ENCODE measurements at regions of chr2 and their contacts with region 1.

Region 1: GRCh38 chr2:223993621-223994232 is 36.5 kb downstream of the MRPL44 start:
- DNase-seq: peak; percentile 77
- ATAC-seq: peak; percentile 44
- H3K4me3 ChIP-seq: no peak overlapping the region
- H3K27ac ChIP-seq: no peak overlapping the region
- H3K4me1 ChIP-seq: peaks cover 61% of the 10 kb centered on the region
- H3K27me3 ChIP-seq: no peaks in the 10 kb centered on the region
- CTCF ChIP-seq: peak; percentile 92
- EP300 ChIP-seq: no peak
- POLR2A ChIP-seq: no peak
- RAD21 ChIP-seq: peak; percentile 86

Region 2: DNA sequence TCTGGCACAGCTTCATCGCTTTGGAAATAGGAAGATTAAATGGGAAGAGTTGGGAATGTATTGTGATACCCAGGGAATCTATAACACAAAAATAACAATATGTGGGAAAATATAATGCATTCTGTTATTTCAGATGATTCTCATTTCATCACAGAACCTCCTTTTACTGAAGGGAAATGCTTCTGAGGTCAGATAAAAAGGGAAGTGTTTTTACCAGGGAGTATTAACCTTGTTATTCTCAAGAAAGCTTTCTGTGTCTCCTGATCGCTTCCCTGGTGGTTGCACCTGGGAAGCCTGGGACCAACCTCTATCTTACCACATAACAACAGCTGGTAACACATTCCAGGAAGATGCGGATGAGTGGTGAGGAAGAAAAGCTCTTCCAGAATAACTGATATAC is 438.8 kb before region 1 on chr2:
- CTCF ChIA-PET with region 1: no interaction called
- POLR2A ChIA-PET with region 1: no interaction called
- in situ Hi-C with region 1: no loop called
- intact Hi-C with region 1: loop called (anchors 5 kb)
- DNase-seq: no peak
- ATAC-seq: no peak
- H3K4me3 ChIP-seq: no peak overlapping the region
- H3K27ac ChIP-seq: no peak overlapping the region
- H3K4me1 ChIP-seq: no peaks in the 10 kb centered on the region
- H3K27me3 ChIP-seq: no peaks in the 10 kb centered on the region; a peak in 1 of 5 replicates
- CTCF ChIP-seq: no peak
- EP300 ChIP-seq: no peak
- POLR2A ChIP-seq: no peak
- RAD21 ChIP-seq: no peak

Region 3: DNA sequence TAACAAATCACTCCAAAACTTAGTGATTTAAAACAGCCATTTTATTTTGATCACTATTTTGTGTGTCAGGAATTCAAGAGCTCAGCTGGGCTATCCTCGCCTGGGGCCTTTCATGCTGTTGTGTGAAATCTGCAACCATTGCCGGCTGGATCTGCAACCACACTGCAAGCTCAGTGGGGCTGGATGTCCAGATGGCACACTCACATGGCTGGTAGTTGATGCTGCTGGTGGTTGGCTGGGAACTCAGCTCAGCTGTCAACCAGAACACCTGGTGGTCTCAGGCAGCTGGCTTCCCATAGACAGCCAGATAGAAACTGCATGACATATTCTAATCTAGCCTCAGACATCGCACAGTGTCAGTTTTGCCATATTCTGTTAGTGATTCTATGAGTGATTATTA is 125.7 kb before region 1 on chr2:
- CTCF ChIA-PET with region 1: no interaction called
- POLR2A ChIA-PET with region 1: no interaction called
- in situ Hi-C with region 1: no loop called
- intact Hi-C with region 1: no loop called
- DNase-seq: no peak
- ATAC-seq: no peak; the same call in 1 of the 3 replicates
- H3K4me3 ChIP-seq: no peak overlapping the region
- H3K27ac ChIP-seq: no peak overlapping the region
- H3K4me1 ChIP-seq: peaks cover 11% of the 10 kb centered on the region
- H3K27me3 ChIP-seq: no peaks in the 10 kb centered on the region
- CTCF ChIP-seq: no peak
- EP300 ChIP-seq: no peak
- POLR2A ChIP-seq: no peak
- RAD21 ChIP-seq: no peak

Region 4: DNA sequence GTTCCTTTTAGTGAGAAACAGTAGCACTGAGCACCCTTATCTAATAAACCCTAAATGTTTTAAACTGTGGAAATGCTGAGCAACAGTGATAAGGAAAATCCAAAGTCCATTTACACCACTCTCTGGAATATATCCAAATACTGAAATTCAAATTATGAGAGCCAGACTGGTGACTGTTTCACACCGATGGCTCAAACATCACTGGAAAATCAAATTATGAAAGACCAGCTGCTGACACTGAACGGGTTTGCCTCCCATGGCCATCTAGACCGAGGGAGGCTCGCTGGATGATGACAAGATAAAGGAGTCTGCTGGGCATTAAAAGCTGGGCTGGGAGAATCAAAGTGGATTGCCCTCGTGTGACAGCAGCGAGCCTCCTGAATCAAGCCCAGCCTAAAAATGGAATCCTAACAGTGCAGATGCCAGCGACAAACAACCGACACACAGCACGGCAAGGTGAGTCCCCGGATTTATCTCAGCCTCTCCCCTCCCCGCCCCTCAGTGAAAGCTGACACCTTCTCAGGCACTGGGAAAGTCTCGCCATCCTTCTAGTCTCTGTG is 15.1 kb after region 1 on chr2:
- CTCF ChIA-PET with region 1: no interaction called
- POLR2A ChIA-PET with region 1: interaction called, 7 read pairs
- in situ Hi-C with region 1: no loop called
- intact Hi-C with region 1: loop called (anchors 1 kb)
- DNase-seq: peak; percentile 53
- ATAC-seq: peak; percentile 84
- H3K4me3 ChIP-seq: peak overlapping the region in 2 of 3 experiments; percentile 12 to 15; a peak in 3 of 6 replicates
- H3K27ac ChIP-seq: no peak overlapping the region
- H3K4me1 ChIP-seq: peaks cover 34% of the 10 kb centered on the region
- H3K27me3 ChIP-seq: no peaks in the 10 kb centered on the region
- CTCF ChIP-seq: no peak
- EP300 ChIP-seq: no peak
- POLR2A ChIP-seq: no peak
- RAD21 ChIP-seq: no peak

Region 5: GRCh38 chr2:224039124-224039940 is 45.6 kb after region 1 on chr2 and contains the start of gene SERPINE2:
- CTCF ChIA-PET with region 1: interaction called, 3 read pairs
- POLR2A ChIA-PET with region 1: interaction called, 6 read pairs
- in situ Hi-C with region 1: no loop called
- intact Hi-C with region 1: loop called (anchors 1 kb)
- DNase-seq: no peak
- ATAC-seq: peak; percentile 72
- H3K4me3 ChIP-seq: peak within 1 kb of the TSS; percentile 69 to 84 (median 77)
- H3K27ac ChIP-seq: no peak within 1 kb of the TSS
- H3K4me1 ChIP-seq: peaks cover 32% of the 10 kb centered on the region
- H3K27me3 ChIP-seq: peaks cover 3 to 54% of the 10 kb centered on the region in 2 experiments; a peak in 4 of 5 replicates
- CTCF ChIP-seq: peak; percentile 93
- EP300 ChIP-seq: no peak
- POLR2A ChIP-seq: no peak
- RAD21 ChIP-seq: peak; percentile 47
- total RNA-seq, gene SERPINE2: 5.5 and 7.9 TPM in 2 replicates

Region 6: GRCh38 chr2:224101820-224102630 is 108.3 kb after region 1 on chr2:
- CTCF ChIA-PET with region 1: no interaction called
- POLR2A ChIA-PET with region 1: no interaction called
- in situ Hi-C with region 1: no loop called
- intact Hi-C with region 1: loop called (anchors 5 kb)
- DNase-seq: no peak
- ATAC-seq: no peak
- H3K4me3 ChIP-seq: no peak overlapping the region
- H3K27ac ChIP-seq: no peak overlapping the region
- H3K4me1 ChIP-seq: peaks cover 49% of the 10 kb centered on the region
- H3K27me3 ChIP-seq: peaks cover 0 to 2% of the 10 kb centered on the region in 2 experiments; a peak in 1 of 5 replicates
- CTCF ChIP-seq: no peak
- EP300 ChIP-seq: no peak
- POLR2A ChIP-seq: no peak
- RAD21 ChIP-seq: no peak

Region 7: DNA sequence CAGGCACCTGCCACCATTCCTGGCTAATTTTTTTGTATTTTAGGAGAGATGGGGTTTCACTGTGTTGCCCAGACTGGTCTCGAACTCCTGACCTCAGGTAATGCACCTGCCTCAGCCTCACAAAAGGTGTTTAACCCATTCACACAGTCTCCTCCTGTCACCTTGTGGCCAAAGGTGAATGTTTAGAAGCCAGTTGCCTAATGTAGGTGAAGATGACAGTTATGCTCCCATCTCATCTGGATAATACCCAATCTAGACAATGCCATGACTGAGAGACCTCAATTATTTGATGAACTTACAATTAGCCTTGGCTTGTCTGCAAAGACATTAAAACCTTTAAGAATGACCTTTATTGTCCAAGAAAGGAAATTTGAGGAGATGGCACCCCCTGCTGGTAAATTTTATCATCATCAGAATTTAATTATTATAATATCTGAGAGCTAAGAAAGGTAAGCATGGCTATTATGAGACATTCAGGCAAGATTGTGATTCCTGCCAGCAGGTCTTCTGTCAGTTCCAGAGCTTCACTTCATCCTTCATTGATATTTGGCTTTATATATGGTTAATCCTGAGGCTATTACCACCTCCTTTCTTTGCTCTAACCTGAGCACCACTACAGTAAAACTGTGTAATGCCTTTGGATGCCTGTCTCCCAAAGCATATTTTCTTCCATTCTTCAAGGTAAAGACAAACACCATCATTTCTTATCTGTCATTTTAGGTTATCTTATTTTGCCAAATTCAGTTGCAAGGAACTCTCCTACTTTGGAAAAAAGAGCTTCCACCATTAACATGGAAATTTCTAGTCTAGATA is 290.6 kb after region 1 on chr2:
- CTCF ChIA-PET with region 1: interaction called, 272 read pairs
- POLR2A ChIA-PET with region 1: interaction called, 13 read pairs
- in situ Hi-C with region 1: loop called (anchors 5 kb)
- intact Hi-C with region 1: loop called (anchors 1 kb)
- DNase-seq: peak; percentile 73
- ATAC-seq: peak; percentile 85
- H3K4me3 ChIP-seq: no peak overlapping the region
- H3K27ac ChIP-seq: no peak overlapping the region
- H3K4me1 ChIP-seq: no peaks in the 10 kb centered on the region
- H3K27me3 ChIP-seq: no peaks in the 10 kb centered on the region
- CTCF ChIP-seq: peak; percentile 97
- EP300 ChIP-seq: no peak
- POLR2A ChIP-seq: no peak
- RAD21 ChIP-seq: peak; percentile 92

Region 8: DNA sequence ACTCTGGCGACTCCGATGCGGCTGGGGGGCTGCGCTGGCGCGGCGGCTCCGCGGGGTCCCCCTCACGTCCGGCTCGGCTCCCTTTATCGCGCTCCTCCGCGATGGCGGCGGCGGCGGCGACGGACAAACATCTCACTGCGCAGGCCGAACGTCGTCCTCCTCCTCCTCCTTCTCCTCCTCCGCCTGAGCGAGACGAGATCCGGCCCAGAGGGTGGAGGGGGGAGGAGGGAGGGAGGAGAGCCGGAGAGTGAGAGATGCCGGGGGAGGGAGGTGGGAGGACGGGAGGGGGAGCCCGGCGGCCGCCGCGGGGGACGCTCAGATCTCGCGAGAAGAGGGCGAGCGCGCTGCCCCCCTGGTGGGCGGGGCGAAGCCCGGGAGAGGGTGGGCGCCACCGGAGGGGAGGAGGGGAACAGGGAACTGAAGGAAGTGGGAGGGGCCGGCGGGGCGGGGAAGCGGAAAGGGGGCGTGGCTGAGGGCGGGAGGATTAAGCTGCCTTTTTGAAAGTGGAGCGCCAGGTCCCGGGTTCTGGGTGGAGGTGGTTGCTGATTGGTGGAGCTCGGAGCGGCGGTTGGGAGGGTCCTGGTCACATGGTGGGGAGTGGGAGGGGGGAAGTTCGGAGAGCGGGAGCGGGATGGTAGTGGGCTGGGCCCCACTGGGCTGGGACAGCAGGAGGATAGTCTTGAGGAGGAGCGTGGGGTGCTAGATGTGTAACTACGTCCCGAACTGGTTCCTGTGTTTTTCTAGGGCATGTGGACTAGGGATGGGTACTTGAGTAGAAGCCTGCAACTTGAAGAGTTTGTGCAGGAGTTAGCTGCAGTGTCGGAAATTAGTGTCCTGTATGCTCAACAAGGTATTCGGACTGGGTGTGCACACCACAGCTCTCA is 591.7 kb after region 1 on chr2 and contains the start of gene CUL3:
- CTCF ChIA-PET with region 1: no interaction called
- POLR2A ChIA-PET with region 1: no interaction called
- in situ Hi-C with region 1: no loop called
- intact Hi-C with region 1: loop called (anchors 10 kb)
- DNase-seq: peak; percentile 97
- ATAC-seq: peak; percentile 98
- H3K4me3 ChIP-seq: peak within 1 kb of the TSS; percentile 87 to 92 (median 89)
- H3K27ac ChIP-seq: peak within 1 kb of the TSS; percentile 81
- H3K4me1 ChIP-seq: peaks cover 33% of the 10 kb centered on the region
- H3K27me3 ChIP-seq: no peaks in the 10 kb centered on the region; a peak in 1 of 5 replicates
- CTCF ChIP-seq: no peak
- EP300 ChIP-seq: 0 out of 4 replicates have a peak, but pooled peaks have one; percentile 29 to 30
- POLR2A ChIP-seq: peak; percentile 90 to 96
- RAD21 ChIP-seq: no peak
- total RNA-seq, gene CUL3: 62.3 and 97.3 TPM in 2 replicates

Measured in HepG2 (cell line).